A549 (cell line): ENCODE measurements at regions of chr12 and their contacts with region 1.

Region 1: DNA sequence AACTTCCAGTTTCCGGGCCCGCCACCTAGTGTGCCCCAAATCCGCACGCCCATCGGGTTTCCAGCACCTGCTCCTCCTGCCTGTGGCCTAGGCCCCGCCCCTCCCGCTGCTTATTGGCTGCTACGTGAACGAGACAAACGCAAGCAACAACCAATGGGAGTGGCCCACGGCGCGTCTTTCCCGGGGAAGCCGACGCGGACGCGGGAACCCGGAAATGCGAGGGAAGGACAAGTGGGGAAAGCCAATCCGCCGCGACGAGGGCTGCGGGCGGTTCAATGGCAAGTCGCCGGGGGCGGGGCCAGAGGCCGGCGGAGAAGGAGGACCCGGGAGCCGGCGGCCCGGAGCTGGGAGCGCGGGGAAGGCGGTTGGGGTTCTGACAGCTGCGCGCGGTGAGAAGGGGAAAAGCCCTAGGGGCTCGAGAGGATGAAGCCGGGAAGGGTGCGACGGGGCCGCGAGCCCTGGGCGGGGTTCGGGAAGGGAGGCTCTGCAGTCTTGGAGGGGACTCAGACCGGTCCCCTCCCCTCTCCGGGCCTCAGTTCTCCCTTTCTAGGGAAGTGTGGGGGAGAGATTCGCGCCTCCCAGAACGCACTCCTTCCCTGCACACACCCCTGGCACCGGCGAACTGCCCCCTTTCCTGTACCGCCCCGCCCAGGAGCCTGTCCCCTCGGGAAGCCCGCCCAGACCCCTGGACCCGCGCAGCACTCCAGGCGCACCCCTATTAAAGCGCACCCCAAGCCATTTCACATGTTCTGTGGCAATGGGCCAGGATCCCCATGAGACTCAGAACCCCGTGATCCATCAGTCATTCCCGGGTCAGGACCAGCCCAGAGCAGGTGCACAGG is at the start of gene FICD:
- DNase-seq: peak; percentile 95 to 99
- ATAC-seq: peak; percentile 88 to 93
- H3K4me3 ChIP-seq: peak within 1 kb of the TSS; percentile 66
- H3K27ac ChIP-seq: peak within 1 kb of the TSS; percentile 66 to 85
- H3K4me1 ChIP-seq: no peaks in the 10 kb centered on the region; the same call in 2 of the 3 replicates
- CTCF ChIP-seq: no peak
- EP300 ChIP-seq: no peak
- POLR2A ChIP-seq: peak; percentile 53
- RAD21 ChIP-seq: no peak
- polyA plus RNA-seq, gene FICD: 1.7 and 4.8 TPM in 2 replicates

Region 2: DNA sequence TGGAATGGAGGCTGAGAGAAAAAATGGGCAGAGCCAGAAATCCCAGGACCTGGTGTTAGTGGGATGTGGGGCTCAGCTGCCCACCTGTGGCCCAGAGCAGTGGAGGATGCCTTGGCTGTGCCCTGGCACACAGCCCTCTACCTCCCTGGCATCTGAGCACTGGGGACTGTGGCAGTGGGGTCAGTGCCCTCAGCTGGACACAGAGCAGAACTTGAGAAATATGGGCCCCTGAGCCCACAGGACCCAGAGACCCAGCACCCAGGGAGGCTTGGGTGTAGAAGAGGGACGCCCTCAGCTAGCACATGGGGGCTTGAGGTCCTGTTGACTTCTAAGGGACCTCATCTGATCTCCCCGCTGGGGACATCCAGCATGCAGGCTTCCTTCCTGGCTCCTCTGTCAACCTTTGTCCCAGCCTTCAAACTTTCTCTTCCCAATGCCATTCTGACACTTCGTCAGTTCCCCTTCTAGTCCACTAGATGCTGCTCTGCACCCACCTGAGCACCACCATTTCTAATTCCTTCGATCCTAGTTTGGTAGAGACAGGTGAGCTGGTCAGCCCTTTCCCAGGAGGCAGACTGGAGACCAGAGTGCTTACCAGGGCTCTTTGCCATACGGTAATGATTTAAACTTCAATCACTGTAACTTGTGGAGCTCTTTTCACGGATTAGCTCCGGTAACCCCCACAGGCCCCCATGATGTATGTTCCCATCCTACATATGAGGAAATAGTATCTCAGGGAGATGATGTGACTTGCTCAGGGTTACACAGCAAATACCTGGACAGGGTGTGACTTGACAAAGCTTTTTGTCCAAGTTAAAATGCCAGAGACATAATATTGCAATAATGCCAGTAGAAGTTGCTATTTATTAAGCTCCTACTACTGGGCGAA is 597.0 kb before region 1 on chr12:
- CTCF ChIA-PET with region 1: interaction called, 32 read pairs
- POLR2A ChIA-PET with region 1: no interaction called
- DNase-seq: peak; percentile 54
- ATAC-seq: peak; percentile 87 to 88
- H3K4me3 ChIP-seq: no peak overlapping the region
- H3K27ac ChIP-seq: no peak overlapping the region
- H3K4me1 ChIP-seq: no peaks in the 10 kb centered on the region
- CTCF ChIP-seq: peak; percentile 66
- EP300 ChIP-seq: no peak
- POLR2A ChIP-seq: no peak
- RAD21 ChIP-seq: peak; percentile 75 to 81

Region 3: DNA sequence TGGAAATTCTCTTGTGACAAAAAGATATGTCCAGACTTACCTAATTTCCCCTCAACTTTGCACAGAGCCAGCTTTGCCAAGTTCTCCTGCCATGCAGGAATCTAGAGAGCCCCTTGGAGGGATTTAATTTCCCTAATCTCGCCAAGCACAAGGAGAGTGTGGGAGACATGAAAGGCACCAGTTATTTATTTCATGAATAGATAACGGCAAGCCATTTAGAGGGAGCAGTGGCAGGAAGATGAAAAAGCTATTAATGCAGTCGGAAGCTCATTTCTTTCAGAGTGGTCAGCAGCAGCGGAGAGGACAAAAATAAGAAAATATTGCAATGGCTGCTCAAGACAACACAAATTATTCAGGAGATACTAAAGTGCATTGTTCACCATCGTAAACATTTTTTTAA is 537.0 kb before region 1 on chr12:
- CTCF ChIA-PET with region 1: interaction called, 11 read pairs
- POLR2A ChIA-PET with region 1: no interaction called
- DNase-seq: no peak
- ATAC-seq: no peak
- H3K4me3 ChIP-seq: no peak overlapping the region
- H3K27ac ChIP-seq: no peak overlapping the region
- H3K4me1 ChIP-seq: no peaks in the 10 kb centered on the region
- CTCF ChIP-seq: no peak
- EP300 ChIP-seq: no peak
- POLR2A ChIP-seq: no peak
- RAD21 ChIP-seq: no peak

Region 4: GRCh38 chr12:107992870-107993451 is 522.2 kb before region 1 on chr12:
- CTCF ChIA-PET with region 1: interaction called, 113 read pairs
- POLR2A ChIA-PET with region 1: no interaction called
- DNase-seq: peak; percentile 27 to 69
- ATAC-seq: peak; percentile 96 to 100
- H3K4me3 ChIP-seq: no peak overlapping the region
- H3K27ac ChIP-seq: no peak overlapping the region
- H3K4me1 ChIP-seq: no peaks in the 10 kb centered on the region
- CTCF ChIP-seq: peak; percentile 20; the same call in 2 of the 3 replicates
- EP300 ChIP-seq: no peak
- POLR2A ChIP-seq: no peak
- RAD21 ChIP-seq: peak in 1 of 2 experiments; percentile 45; a peak in 3 of 5 replicates

Region 5: DNA sequence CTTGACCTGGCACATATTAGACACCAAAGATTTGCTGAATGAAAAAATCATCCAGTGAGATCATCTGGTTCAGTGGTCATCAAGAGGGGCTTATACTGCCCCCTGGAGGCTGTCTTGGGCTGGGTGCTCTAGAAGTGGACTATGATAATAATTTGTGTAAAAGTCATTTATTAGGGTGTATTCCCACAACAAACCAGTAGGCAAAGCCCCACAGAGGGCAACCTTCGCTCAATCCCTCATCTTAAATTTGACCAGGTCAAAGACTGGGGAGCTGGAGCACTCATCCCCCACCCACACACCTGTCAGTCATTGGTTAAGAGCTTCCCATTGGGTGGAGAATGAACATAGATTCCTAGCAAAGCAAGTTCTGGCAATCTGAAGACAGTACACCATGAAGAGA is 20.1 kb before region 1 on chr12:
- CTCF ChIA-PET with region 1: interaction called, 15 read pairs
- POLR2A ChIA-PET with region 1: no interaction called
- DNase-seq: peak; percentile 55 to 59
- ATAC-seq: peak; percentile 48 to 89; a peak in 4 of 6 replicates
- H3K4me3 ChIP-seq: no peak overlapping the region
- H3K27ac ChIP-seq: no peak overlapping the region
- H3K4me1 ChIP-seq: no peaks in the 10 kb centered on the region
- CTCF ChIP-seq: peak; percentile 45
- EP300 ChIP-seq: no peak
- POLR2A ChIP-seq: no peak
- RAD21 ChIP-seq: peak; percentile 43 to 73; a peak in 4 of 5 replicates

Region 6: GRCh38 chr12:108531929-108532848 is 17.0 kb after region 1 on chr12:
- CTCF ChIA-PET with region 1: interaction called, 10 read pairs
- POLR2A ChIA-PET with region 1: no interaction called
- DNase-seq: no peak
- ATAC-seq: peak in 1 of 2 experiments; percentile 47; a peak in 2 of 6 replicates
- H3K4me3 ChIP-seq: no peak overlapping the region
- H3K27ac ChIP-seq: no peak overlapping the region
- H3K4me1 ChIP-seq: no peaks in the 10 kb centered on the region
- CTCF ChIP-seq: no peak
- EP300 ChIP-seq: no peak
- POLR2A ChIP-seq: no peak
- RAD21 ChIP-seq: no peak

Region 7: GRCh38 chr12:109385339-109386067 is 870.3 kb after region 1 on chr12:
- CTCF ChIA-PET with region 1: no interaction called
- POLR2A ChIA-PET with region 1: no interaction called
- DNase-seq: peak; percentile 51 to 64
- ATAC-seq: peak; percentile 74 to 80
- H3K4me3 ChIP-seq: no peak overlapping the region
- H3K27ac ChIP-seq: peak overlapping the region; percentile 46 to 47; a peak in 1 of 6 replicates
- H3K4me1 ChIP-seq: peaks cover 8% of the 10 kb centered on the region; the same call in 2 of the 3 replicates
- CTCF ChIP-seq: peak; percentile 92
- EP300 ChIP-seq: no peak
- POLR2A ChIP-seq: no peak
- RAD21 ChIP-seq: peak; percentile 94 to 97